ENCODE measurements at regions of chr4 and their contacts with region 1.

Region 1: DNA sequence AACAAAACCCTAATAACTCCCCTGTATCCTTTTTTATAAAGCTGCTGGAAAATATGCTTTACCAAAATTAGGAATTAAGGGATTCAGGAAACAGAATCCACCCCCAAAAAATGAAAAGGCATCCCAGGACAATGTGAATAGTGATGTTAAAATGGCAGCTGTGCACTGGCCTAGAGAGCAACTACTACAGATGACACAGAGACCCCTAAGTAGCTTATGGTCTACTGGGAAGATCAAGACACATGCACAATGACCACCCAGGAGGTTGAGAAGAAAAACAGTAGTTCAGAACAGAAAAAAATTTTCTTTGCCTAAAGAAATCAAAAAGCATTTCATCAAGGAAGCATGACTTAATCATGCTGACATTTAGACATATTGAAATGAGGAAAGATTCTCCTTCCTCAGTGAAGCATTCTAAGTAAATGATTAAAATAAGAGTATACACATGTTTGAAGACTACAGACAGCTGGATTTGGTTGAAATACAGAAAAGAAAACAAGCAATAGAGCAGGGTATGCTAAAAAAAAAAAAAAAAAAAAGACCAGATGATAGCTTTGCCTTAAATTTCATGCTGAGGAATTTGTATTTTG is 117.3 kb downstream of the WDFY3 start:
- DNase-seq: no peak
- ATAC-seq: no peak

Region 2: GRCh38 chr4:84966383-84967242 is 117.5 kb after region 1 on chr4 and contains the start of gene WDFY3:
- intact Hi-C with region 1: loop called (anchors 10 kb)
- DNase-seq: peak; percentile 86
- ATAC-seq: peak; percentile 95
- total RNA-seq, gene WDFY3: 34.2 TPM

Measured in Right ventricle myocardium superior (tissue), 1 donor.